ENCODE measurements at regions of chr1 and their contacts with region 1.

Region 1: GRCh38 chr1:202160377-202160940 is at the start of gene PTPN7:
- DNase-seq: peak in 1 of 10 donors; percentile 86

Region 2: GRCh38 chr1:201905234-201905890 is 255.1 kb before region 1 on chr1:
- intact Hi-C with region 1: loop called (anchors 5 kb)
- DNase-seq: peak in 2 of 10 donors; percentile 24 to 54

Measured in posterior cingulate gyrus (tissue), 11 donors.